ENCODE measurements at regions of chr1 and their contacts with region 1.

Region 1: GRCh38 chr1:206635080-206635977 is at the start of gene DYRK3:
- DNase-seq: peak; percentile 98
- H3K4me3 Mint-ChIP-seq: peak within 1 kb of the TSS; percentile 95
- H3K27ac Mint-ChIP-seq: peak within 1 kb of the TSS; percentile 75
- H3K4me1 Mint-ChIP-seq: peaks cover 26% of the 10 kb centered on the region
- H3K27me3 Mint-ChIP-seq: peaks cover 26% of the 10 kb centered on the region
- CTCF ChIP-seq: no peak
- total RNA-seq, gene DYRK3: 7.6 and 8.0 TPM in 2 replicates

Region 2: DNA sequence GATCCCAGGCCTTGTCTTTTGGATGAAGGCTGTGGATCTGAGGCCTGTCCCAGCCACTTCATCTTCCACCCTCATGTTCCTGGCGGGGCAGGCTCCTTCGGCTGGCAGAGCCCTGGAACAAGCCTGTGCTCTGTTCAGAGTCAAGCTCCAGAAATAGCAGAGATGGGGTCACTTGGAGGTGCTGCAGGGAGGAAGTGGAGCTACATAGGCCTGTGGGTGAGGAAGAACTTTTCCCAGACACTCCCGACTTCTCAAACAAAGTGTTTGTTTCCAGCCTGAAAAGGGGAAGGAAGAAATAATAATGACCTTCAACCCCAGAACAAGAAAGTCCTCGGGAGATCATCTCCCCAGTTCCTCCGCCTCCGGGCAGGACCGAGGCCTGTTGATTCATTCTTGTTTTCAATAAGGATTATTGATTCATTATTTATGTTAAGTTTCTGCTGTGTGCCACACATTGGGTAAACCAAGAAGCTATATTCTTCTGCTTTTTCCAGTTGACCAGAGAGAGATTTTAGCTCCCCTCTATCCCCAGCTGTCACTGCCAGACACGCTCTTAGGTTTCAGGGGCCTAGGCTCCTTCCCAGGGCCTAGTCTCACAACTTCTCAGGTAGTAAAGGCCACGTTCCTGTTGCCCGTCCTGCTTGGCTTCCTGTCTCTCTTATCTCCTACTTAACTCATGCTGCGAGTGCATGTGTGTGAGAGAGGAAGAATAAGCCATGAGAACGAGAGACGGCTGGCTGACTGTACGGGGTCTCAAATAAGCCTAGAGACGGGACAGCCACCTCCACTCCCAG is 148.1 kb before region 1 on chr1:
- CTCF ChIA-PET with region 1: no interaction called
- intact Hi-C with region 1: no loop called
- DNase-seq: no peak
- H3K4me3 Mint-ChIP-seq: no peak overlapping the region
- H3K27ac Mint-ChIP-seq: no peak overlapping the region
- H3K4me1 Mint-ChIP-seq: no peaks in the 10 kb centered on the region
- H3K27me3 Mint-ChIP-seq: no peaks in the 10 kb centered on the region
- CTCF ChIP-seq: no peak

Region 3: DNA sequence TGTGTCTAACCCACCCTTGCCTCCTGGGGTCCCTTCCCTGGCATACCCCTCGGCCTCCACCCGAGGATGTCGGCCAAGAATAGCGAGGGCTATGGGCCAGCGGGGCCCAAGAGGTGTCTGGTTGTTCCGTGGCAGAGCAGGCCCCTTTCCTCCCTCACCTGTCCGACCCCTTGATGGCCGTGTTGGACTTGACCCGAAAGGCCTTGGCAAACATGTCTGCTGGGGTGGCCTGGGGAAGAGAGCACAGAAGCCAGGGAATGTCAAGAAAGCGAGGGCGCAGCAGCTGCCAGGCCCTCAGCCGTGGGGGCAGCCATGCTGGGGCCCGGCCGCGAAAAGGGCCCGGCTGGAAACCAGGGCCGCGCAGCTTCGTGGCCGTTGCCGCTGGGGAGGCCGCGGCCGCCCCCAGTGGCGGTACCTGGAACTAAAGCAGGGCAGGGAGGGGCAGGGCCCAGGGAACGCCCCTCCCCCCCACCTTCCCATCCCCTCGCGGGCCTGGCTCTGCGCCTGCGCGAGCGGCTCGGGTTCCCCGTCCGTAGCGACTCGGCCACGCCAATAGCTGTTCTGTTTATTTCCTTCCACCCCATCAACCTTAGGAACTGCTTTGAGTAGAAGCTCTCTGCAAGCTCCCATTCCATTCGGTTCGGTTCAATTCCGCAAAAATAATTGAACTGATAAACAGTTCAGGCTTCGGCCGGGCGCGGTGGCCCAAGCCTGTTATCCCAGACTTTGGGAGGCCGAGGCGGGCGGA is 23.0 kb before region 1 on chr1 and contains the start of gene EIF2D:
- CTCF ChIA-PET with region 1: interaction called, 17 read pairs
- intact Hi-C with region 1: no loop called
- DNase-seq: peak; percentile 99
- H3K4me3 Mint-ChIP-seq: peak within 1 kb of the TSS; percentile 89
- H3K27ac Mint-ChIP-seq: peak within 1 kb of the TSS; percentile 93
- H3K4me1 Mint-ChIP-seq: peaks cover 18% of the 10 kb centered on the region
- H3K27me3 Mint-ChIP-seq: peaks cover 20% of the 10 kb centered on the region
- CTCF ChIP-seq: peak; percentile 97
- total RNA-seq, gene EIF2D: 41.8 and 45.1 TPM in 2 replicates

Region 4: GRCh38 chr1:206663832-206664652 is 28.7 kb after region 1 on chr1:
- CTCF ChIA-PET with region 1: interaction called, 47 read pairs
- intact Hi-C with region 1: loop called (anchors 1 kb)
- DNase-seq: peak; percentile 82
- H3K4me3 Mint-ChIP-seq: no peak overlapping the region
- H3K27ac Mint-ChIP-seq: no peak overlapping the region
- H3K4me1 Mint-ChIP-seq: no peaks in the 10 kb centered on the region
- H3K27me3 Mint-ChIP-seq: peaks cover 76% of the 10 kb centered on the region
- CTCF ChIP-seq: peak; percentile 90

Region 5: DNA sequence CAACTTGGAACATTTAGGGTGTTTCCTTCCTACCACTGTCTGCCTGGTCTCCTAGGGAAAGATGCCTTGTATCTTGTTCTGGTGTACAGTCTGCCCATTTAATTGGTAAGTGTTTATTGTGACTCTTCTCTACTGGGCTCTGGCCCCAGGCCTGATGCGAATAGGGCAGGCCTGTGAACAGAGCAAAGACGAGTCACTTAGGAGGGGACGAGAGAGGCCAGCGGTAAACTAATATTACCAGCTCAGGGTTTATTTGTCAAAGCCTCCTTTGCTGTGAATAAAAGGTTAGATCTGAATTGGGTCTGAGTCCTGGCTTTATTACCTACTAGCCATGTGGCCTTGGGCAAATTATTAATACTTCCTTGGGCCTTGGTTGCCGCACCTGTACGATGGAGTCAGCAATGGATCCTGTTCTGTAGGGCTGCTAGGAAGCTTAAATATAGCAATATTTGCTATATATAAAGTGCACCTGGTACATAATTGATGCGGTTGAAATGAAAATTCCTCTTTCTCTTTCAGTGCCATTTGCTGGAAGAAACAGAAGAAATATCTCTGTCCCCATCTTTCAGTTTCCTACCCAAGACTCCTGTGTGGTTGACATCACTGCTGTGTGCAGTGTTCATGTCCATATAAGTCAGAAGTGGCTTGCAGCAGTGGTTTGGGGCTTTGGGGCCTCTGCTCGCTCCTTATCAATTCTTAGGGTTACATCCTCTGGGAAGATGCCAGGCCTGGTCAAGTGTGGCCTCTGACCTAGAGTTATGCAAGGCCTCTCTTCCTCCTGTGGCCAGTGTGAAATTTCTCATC is 81.7 kb after region 1 on chr1:
- CTCF ChIA-PET with region 1: interaction called, 3 read pairs
- intact Hi-C with region 1: loop called (anchors 10 kb)
- DNase-seq: no peak
- H3K4me3 Mint-ChIP-seq: no peak overlapping the region
- H3K27ac Mint-ChIP-seq: no peak overlapping the region
- H3K4me1 Mint-ChIP-seq: peaks cover 61% of the 10 kb centered on the region
- H3K27me3 Mint-ChIP-seq: no peaks in the 10 kb centered on the region
- CTCF ChIP-seq: no peak

Region 6: DNA sequence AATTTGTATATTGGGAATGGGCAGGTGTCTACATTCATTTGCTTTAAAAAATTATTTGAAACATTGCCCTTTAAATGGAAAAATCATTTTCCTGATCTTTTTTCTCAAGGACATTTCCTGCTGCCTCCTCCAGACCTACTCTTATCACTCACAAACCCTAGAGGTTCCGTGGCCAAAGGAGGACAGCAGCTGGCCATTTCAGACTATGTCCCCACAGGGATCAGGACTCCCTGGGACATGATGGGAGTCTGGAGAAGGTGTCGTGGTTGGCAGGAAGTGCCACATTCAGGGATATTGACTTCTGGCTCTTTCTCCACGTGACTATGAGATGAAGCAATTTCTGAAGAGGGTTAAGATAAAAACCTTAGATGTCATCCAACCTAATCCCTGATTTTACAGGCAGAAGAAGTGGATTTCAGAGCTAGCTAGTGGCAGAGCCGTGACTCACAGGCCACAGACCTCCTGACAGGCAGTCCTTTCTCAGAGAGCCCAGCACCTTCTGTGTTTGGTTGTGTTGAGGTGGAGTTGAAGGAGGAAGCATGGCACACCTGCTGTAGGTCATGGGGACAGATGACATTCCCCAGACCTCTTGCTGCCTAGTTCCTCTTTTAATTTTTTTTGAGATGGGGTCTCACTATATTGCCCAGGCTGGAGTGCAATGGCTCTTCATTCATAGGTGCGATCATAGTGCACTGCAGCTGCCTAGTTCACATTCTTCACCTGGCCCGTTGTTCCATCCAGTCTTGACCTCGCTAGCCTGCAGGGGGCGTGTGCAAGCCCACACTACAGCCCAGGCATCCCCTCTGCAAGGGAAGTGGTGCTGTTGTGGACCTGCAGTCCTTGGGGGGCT is 162.4 kb after region 1 on chr1:
- CTCF ChIA-PET with region 1: no interaction called
- intact Hi-C with region 1: no loop called
- DNase-seq: peak; percentile 31
- H3K4me3 Mint-ChIP-seq: no peak overlapping the region
- H3K27ac Mint-ChIP-seq: no peak overlapping the region
- H3K4me1 Mint-ChIP-seq: no peaks in the 10 kb centered on the region
- H3K27me3 Mint-ChIP-seq: peaks cover 83% of the 10 kb centered on the region
- CTCF ChIP-seq: peak; percentile 58

Region 7: GRCh38 chr1:206808615-206809014 is 173.3 kb after region 1 on chr1:
- CTCF ChIA-PET with region 1: interaction called, 4 read pairs
- intact Hi-C with region 1: loop called (anchors 2 kb)
- DNase-seq: peak; percentile 21
- H3K4me3 Mint-ChIP-seq: no peak overlapping the region
- H3K27ac Mint-ChIP-seq: no peak overlapping the region
- H3K4me1 Mint-ChIP-seq: no peaks in the 10 kb centered on the region
- H3K27me3 Mint-ChIP-seq: peaks cover 97% of the 10 kb centered on the region
- CTCF ChIP-seq: no peak

Region 8: GRCh38 chr1:207077470-207078377 is 442.4 kb after region 1 on chr1:
- CTCF ChIA-PET with region 1: no interaction called
- intact Hi-C with region 1: loop called (anchors 5 kb)
- DNase-seq: peak; percentile 83
- H3K4me3 Mint-ChIP-seq: no peak overlapping the region
- H3K27ac Mint-ChIP-seq: no peak overlapping the region
- H3K4me1 Mint-ChIP-seq: peaks cover 9% of the 10 kb centered on the region
- H3K27me3 Mint-ChIP-seq: no peaks in the 10 kb centered on the region
- CTCF ChIP-seq: peak; percentile 73

Region 9: DNA sequence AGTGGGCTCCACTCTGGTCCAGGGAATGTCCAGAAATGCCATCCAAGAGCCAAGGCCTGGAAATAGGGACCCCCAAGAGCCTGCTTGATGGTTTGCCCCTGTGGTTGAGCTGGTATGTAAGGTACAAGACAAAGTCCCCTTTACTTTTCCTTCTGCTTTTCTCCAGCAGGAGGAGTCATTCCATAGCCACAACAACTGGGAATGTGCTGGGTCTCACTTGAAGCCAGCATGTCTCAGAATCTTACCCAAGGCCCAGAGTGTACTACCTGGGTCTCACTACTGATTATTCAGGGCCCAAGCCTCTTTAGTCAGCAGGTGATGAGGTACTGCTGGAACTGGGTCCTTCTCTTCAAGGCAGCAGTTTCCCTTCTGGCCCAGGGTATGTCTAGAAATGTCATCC is 624.1 kb after region 1 on chr1:
- CTCF ChIA-PET with region 1: no interaction called
- intact Hi-C with region 1: no loop called
- DNase-seq: peak; percentile 33
- H3K4me3 Mint-ChIP-seq: no peak overlapping the region
- H3K27ac Mint-ChIP-seq: no peak overlapping the region
- H3K4me1 Mint-ChIP-seq: no peaks in the 10 kb centered on the region
- H3K27me3 Mint-ChIP-seq: no peaks in the 10 kb centered on the region
- CTCF ChIP-seq: peak; percentile 49